ENCODE measurements at regions of chr2 and their contacts with region 1.

Region 1: GRCh38 chr2:208254871-208255556 is at the start of gene IDH1:
- DNase-seq: peak; percentile 97 to 99 (median 99)
- H3K4me3 ChIP-seq: peak within 1 kb of the TSS; percentile 50 to 94 (median 64)
- H3K27ac ChIP-seq: peak within 1 kb of the TSS; percentile 61 to 95 (median 69)
- H3K4me1 ChIP-seq: peaks cover 34 to 36% of the 10 kb centered on the region in 2 donors
- H3K27me3 ChIP-seq: no peaks in the 10 kb centered on the region
- CTCF ChIP-seq: peak; percentile 32 to 57 (median 54)
- POLR2A ChIP-seq: peak in 1 of 2 donors; percentile 83
- total RNA-seq, gene IDH1: 337 to 937 (median 491) TPM

Region 2: GRCh38 chr2:208175069-208175839 is 79.8 kb before region 1 on chr2:
- intact Hi-C with region 1: loop called (anchors 5 to 10 kb)
- DNase-seq: peak; percentile 80 to 96 (median 89)
- H3K4me3 ChIP-seq: no peak overlapping the region
- H3K27ac ChIP-seq: no peak overlapping the region
- H3K4me1 ChIP-seq: peaks cover 0 to 5% of the 10 kb centered on the region in 2 donors
- H3K27me3 ChIP-seq: no peaks in the 10 kb centered on the region
- CTCF ChIP-seq: peak; percentile 75 to 90 (median 87)
- POLR2A ChIP-seq: no peak

Measured in adrenal gland (tissue), 19 donors.